Motor neuron (in vitro differentiated cells): ENCODE measurements at regions of chr6 and their contacts with region 1.

Region 1: DNA sequence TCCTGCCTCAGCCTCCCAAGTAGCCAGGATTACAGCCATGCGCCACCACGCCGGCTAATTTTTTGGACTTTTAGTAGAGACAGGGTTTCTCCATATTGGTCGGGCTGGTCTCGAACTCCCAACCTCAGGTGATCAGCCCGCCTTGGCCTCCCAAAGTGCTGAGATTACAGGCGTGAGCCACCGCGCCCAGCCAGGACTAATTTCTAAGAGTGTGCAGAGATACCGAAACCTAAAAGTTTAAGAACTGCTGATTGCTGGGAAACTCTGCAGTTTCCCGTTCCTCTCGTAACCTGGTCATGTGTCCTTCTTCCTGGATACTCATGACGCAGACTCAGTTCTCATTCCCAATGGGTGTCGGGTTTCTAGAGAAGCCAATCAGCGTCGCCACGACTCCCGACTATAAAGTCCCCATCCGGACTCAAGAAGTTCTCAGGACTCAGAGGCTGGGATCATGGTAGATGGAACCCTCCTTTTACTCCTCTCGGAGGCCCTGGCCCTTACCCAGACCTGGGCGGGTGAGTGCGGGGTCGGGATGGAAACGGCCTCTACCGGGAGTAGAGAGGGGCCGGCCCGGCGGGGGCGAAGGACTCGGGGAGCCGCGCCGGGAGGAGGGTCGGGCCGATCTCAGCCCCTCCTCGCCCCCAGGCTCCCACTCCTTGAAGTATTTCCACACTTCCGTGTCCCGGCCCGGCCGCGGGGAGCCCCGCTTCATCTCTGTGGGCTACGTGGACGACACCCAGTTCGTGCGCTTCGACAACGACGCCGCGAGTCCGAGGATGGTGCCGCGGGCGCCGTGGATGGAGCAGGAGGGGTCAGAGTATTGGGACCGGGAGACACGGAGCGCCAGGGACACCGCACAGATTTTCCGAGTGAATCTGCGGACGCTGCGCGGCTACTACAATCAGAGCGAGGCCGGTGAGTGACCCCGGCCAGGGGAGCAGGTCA is at the start of gene HLA-E:
- ATAC-seq: peak; percentile 73 to 97 (median 96)
- H3K4me3 ChIP-seq: peak within 1 kb of the TSS; percentile 39 to 63 (median 49)
- H3K27ac ChIP-seq: no peak within 1 kb of the TSS
- H3K4me1 ChIP-seq: peaks cover 0 to 3% of the 10 kb centered on the region in 2 donors
- total RNA-seq, gene HLA-E: 1.5 to 221 (median 44.6) TPM

Region 2: DNA sequence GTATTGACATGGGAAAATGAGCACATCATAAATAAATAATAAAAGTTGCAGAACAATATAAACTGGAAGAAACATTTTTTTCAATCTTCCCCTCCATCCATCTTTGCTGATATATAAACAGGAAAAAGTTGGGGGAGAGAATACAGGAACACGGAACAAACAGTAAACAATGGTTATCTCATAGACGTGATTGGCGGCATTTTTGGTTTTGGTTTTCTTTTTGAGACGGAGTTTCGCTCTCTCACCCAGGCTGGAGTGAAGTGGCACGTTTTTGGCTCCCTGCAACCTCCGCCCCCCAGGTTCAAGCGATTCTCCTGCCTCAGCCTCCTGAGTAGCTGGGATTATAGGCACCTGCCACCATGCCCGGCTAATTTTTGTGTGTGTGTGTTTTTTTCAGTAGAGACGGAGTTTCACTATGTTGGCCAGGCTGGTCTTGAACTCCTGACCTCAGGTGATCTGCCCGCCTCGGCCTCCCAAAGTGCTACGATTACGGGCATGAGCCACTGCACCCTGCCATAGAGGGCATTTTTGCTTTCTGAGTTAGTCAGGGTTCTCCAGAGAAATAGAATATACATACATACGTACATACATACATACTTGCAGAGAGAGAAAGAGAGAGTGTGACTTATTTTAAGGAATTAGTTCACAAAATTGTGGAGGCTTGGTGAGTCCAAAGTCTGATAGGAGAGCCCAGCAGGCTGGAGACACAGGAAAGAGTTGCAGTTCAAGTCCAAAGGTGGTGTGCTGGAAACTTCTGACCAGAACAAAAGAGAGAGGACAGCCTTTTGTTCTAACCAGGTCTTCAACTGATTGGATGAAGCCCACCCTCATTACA is 44.3 kb after region 1 on chr6:
- in situ Hi-C with region 1: loop called in 2 of 9 experiments (anchors 10 kb)
- ATAC-seq: no peak
- H3K4me3 ChIP-seq: no peak overlapping the region
- H3K27ac ChIP-seq: no peak overlapping the region
- H3K4me1 ChIP-seq: no peaks in the 10 kb centered on the region

Region 3: GRCh38 chr6:30541515-30542403 is 52.4 kb after region 1 on chr6:
- in situ Hi-C with region 1: loop called in 3 of 9 experiments (anchors 10 kb)
- ATAC-seq: peak; percentile 71 to 81 (median 76)
- H3K4me3 ChIP-seq: peak overlapping the region; percentile 17 to 28 (median 21)
- H3K27ac ChIP-seq: no peak overlapping the region
- H3K4me1 ChIP-seq: peaks cover 0 to 3% of the 10 kb centered on the region in 2 donors

Region 4: GRCh38 chr6:31114970-31115849 is 625.9 kb after region 1 on chr6:
- in situ Hi-C with region 1: loop called in 1 of 9 experiments (anchors 25 kb)
- ATAC-seq: peak in 5 of 8 experiments; percentile 39 to 59 (median 47)
- H3K4me3 ChIP-seq: no peak overlapping the region
- H3K27ac ChIP-seq: no peak overlapping the region
- H3K4me1 ChIP-seq: no peaks in the 10 kb centered on the region

Region 5: GRCh38 chr6:31203345-31203979 is 714.1 kb after region 1 on chr6:
- in situ Hi-C with region 1: no loop called
- ATAC-seq: peak; percentile 83 to 94 (median 89)
- H3K4me3 ChIP-seq: peak overlapping the region in 1 of 5 donors; percentile 19
- H3K27ac ChIP-seq: no peak overlapping the region
- H3K4me1 ChIP-seq: peaks cover 7 to 11% of the 10 kb centered on the region in 2 donors